Cardiac septum (tissue), 1 donor: ENCODE measurements at regions of chr4 and their contacts with region 1.

Region 1: DNA sequence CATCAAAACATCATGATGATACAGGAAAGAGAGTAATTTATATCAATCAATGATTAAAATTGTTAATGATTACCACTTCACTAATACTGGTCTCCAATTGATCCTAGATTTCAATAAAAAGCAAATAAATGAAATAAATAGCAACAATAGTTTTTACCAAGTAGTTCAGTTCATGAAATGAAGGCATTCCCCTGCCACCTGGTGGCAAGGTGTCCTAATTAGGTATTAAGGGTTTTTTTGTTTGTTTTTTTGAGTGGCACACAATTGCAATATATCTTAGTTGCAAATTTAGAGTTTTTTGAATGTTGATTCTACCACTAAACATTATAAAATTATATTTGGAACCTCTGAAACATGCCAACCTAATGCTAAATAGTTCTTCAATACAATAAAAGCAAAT is 157.4 kb upstream of the PDE5A start:
- DNase-seq: no peak

Region 2: DNA sequence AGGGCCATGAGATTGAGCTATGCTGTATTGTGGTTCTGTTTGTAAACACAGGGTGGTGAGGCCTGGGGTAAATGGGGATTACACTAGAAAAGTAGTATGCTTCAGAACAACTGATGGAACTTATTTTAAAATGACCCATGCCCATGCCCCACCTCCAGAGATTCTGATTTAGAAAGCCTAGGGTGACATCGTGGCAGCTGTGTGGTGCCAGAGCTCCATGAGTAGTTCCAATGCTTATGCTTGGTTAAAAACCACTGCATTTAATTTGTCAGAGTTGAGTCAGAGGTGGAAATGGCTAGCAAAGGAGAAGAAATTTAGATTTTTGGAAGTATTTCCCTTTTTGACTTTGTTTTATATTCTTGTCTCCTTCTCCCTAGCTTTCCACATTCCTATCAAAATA is 94.0 kb before region 1 on chr4:
- intact Hi-C with region 1: loop called (anchors 10 kb)
- DNase-seq: no peak